ENCODE measurements at regions of chr2 and their contacts with region 1.

Region 1: GRCh38 chr2:17830053-17831034 is 14.1 kb downstream of the MSGN1 start:
- H3K4me3 Mint-ChIP-seq: peak overlapping the region; percentile 47
- H3K27ac Mint-ChIP-seq: no peak overlapping the region
- H3K4me1 Mint-ChIP-seq: peaks cover 11% of the 10 kb centered on the region
- H3K27me3 Mint-ChIP-seq: peaks cover 20% of the 10 kb centered on the region

Region 2: GRCh38 chr2:17771956-17772355 is 58.4 kb before region 1 on chr2:
- intact Hi-C with region 1: loop called (anchors 5 kb)
- H3K4me3 Mint-ChIP-seq: no peak overlapping the region
- H3K27ac Mint-ChIP-seq: no peak overlapping the region
- H3K4me1 Mint-ChIP-seq: no peaks in the 10 kb centered on the region
- H3K27me3 Mint-ChIP-seq: no peaks in the 10 kb centered on the region

Region 3: DNA sequence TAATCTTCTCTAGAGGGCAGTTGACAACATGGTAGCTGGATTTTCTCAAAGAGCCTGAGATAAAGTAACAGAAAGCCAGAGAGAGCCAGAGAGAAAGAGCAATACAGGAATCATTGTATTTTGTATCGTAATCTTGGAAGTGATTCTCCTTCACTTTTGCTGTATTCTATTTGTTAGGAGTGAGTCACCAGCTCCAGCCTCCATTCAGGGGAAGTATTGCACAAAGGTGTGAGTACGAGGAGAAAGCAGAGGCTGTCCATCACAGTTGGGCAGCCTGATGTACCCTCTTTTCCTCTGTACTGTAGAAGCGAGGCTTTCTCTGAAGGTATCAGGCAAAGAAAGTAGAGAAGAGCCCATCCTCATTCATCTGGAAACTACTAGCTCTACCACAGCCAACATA is 224.9 kb after region 1 on chr2:
- intact Hi-C with region 1: no loop called
- H3K4me3 Mint-ChIP-seq: no peak overlapping the region
- H3K27ac Mint-ChIP-seq: no peak overlapping the region
- H3K4me1 Mint-ChIP-seq: no peaks in the 10 kb centered on the region
- H3K27me3 Mint-ChIP-seq: no peaks in the 10 kb centered on the region

Measured in dendritic cell treated with granulocyte-macrophage colony-stimulating factor and Interleukin-4, amounts not matched to agents 40 ng/mL and 50 ng/mL, for 4 days (primary cell).